ENCODE measurements at regions of chr17 and their contacts with region 1.

Region 1: GRCh38 chr17:50055426-50056230 is at the start of gene ITGA3:
- H3K4me3 ChIP-seq: peak within 1 kb of the TSS; percentile 64
- H3K27ac ChIP-seq: peak within 1 kb of the TSS; percentile 75
- H3K4me1 ChIP-seq: peaks cover 16% of the 10 kb centered on the region
- CTCF ChIP-seq: no peak

Region 2: GRCh38 chr17:50079334-50080095 is 23.9 kb after region 1 on chr17:
- CTCF ChIA-PET with region 1: interaction called, 14 read pairs
- POLR2A ChIA-PET with region 1: interaction called, 4 read pairs
- H3K4me3 ChIP-seq: no peak overlapping the region
- H3K27ac ChIP-seq: no peak overlapping the region
- H3K4me1 ChIP-seq: no peaks in the 10 kb centered on the region
- CTCF ChIP-seq: peak; percentile 87

Measured in HEK293 (cell line).